AG04449 (cell line): ENCODE measurements at regions of chr20 and their contacts with region 1.

Region 1: DNA sequence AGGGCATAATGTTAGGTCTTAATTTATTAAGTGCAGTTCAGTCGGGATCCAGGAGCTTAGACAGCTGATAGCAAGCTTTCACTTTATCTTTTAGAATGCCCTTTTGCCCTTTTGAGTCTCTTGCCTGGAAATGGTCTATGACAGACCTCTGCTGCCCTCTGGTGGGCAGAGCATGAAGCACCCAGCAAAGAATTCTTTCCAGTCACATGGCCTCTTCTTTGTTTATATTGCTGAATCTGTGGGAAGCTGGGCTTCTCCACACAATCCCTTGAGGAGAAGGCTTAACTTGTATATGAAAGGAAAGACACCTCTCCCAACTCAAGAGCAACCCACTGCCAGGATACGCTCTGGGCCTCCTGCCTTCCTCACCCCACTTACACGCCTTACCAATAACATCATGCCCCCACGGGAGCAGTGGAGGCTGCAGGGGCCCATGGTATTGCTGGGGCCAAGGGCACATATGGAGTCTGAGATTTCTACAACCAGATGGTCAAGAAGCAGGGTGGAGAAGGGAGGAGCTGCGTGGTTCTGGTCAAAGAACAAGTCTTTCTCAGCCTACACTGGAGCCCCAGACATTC is 20.4 kb downstream of the WFDC3 start:
- DNase-seq: peak; percentile 26
- H3K4me3 ChIP-seq: no peak overlapping the region; the same call in 1 of the 2 replicates
- CTCF ChIP-seq: peak; percentile 79

Region 2: GRCh38 chr20:45322952-45323383 is 448.3 kb before region 1 on chr20:
- CTCF ChIA-PET with region 1: interaction called, 77 read pairs
- POLR2A ChIA-PET with region 1: no interaction called
- DNase-seq: no peak
- H3K4me3 ChIP-seq: no peak overlapping the region
- CTCF ChIP-seq: no peak

Region 3: GRCh38 chr20:45395114-45395415 is 376.2 kb before region 1 on chr20:
- CTCF ChIA-PET with region 1: no interaction called
- POLR2A ChIA-PET with region 1: no interaction called
- DNase-seq: no peak
- H3K4me3 ChIP-seq: no peak overlapping the region
- CTCF ChIP-seq: no peak

Region 4: GRCh38 chr20:45436732-45437391 is 334.4 kb before region 1 on chr20:
- CTCF ChIA-PET with region 1: interaction called, 24 read pairs
- POLR2A ChIA-PET with region 1: no interaction called
- DNase-seq: no peak
- H3K4me3 ChIP-seq: peak overlapping the region; percentile 60
- CTCF ChIP-seq: peak; percentile 95

Region 5: DNA sequence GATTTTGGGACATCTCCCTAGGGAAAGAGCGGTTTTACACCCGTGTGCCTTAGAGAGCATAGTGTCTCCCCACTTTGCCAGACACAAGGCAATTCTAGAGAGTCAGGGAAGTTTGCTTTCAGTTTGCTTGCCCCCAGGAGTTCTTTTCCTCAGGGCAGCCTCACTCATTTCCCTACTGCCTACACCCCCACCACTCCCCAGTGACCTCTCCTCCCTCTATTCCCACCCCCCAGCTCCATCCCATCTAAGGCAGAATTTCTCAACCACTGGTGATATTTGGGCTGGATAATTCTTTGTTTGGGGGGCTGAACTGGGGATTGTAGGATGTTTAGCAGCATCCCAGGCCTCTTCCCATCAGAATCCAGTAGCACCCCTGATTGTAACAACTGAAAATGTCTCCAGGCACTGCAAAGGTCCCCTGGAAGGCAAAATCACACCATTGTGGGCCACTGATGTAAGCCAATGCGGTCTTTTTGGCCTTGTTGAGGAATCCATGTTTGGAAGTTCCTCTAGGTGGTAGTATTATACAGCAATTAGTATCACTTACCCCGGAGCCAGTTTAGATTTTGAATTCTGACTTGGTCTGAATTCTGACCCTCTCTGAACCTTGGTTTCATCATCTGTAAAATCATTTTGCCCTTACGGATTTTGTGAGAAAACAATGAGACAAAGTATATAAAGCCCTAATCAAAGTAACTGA is 225.4 kb before region 1 on chr20:
- CTCF ChIA-PET with region 1: interaction called, 43 read pairs
- POLR2A ChIA-PET with region 1: no interaction called
- DNase-seq: no peak
- H3K4me3 ChIP-seq: no peak overlapping the region
- CTCF ChIP-seq: no peak

Region 6: DNA sequence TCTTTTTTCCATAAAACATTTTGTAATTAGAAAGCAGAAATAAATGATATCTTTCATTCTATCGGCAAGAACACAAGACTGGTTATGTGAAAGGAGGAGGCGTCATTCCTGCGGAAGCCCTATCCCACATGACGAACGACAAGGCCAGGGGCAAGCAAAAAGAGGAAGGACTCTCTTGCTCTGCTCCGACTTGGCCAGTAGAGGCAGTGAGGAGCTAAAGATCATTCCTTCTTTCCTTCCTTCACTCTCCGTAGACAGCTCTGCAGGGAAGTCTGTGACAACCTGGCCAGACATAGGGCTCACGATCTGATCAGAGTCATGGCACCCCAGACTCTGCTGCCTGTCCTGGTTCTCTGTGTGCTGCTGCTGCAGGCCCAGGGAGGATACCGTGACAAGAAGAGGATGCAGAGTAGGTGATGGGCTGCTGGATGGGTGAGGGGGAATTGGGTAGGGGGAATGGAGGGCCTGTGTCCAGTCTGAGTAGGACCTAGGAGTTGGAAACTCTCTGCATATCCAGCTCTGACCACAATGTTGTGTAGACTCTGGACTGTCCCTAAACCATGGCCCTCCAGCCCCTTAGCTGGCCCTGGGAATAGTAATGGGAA is 141.7 kb before region 1 on chr20 and contains the start of gene WFDC10A:
- CTCF ChIA-PET with region 1: interaction called, 14 read pairs
- POLR2A ChIA-PET with region 1: no interaction called
- DNase-seq: no peak
- H3K4me3 ChIP-seq: no peak within 1 kb of the TSS
- CTCF ChIP-seq: peak; percentile 81

Region 7: GRCh38 chr20:45695496-45695895 is 75.8 kb before region 1 on chr20:
- CTCF ChIA-PET with region 1: no interaction called
- POLR2A ChIA-PET with region 1: no interaction called
- DNase-seq: no peak
- H3K4me3 ChIP-seq: no peak overlapping the region
- CTCF ChIP-seq: no peak

Region 8: DNA sequence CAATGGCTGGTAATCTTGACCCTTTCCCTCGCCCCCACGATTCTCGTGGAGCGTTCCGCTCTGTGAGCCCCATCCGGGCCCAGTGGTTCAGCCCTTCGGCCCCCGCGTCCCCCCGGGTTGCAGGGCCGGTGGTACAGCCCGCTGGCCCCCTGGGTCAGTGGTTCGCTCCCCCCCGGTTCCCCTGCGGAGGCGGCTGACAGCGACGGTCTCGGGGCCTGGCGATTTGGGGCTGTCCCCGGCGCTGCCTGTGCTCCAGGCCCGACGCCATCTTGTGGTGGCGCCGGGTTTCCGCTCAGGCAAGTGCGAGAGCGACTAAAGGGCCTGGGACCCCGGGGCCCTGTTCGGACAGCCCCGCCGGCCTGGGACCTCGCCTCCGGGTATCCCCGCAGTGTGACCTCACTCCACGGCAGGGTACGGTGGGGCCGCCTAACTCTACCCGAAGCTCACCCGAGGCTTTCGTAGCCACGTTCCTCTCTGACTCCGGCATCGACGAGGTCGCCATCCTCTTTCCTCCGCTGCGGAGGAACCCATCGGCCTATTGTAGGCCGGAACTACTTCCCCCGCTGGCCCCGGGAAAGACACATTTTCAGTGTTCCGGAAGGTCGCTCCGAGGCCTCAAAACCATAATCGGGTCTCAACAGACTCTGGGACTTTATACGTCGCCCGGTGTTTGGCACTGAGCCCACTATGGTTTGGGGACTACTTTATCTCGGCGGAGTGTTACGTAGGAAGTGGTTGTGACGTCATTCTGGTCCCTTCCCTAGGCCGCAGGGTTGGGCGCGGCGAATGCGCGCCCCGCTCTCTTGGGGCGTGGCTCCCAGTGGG is 200.6 kb after region 1 on chr20 and contains the start of gene ZNF335:
- CTCF ChIA-PET with region 1: interaction called, 11 read pairs
- POLR2A ChIA-PET with region 1: no interaction called
- DNase-seq: peak; percentile 82
- H3K4me3 ChIP-seq: peak within 1 kb of the TSS; percentile 97
- CTCF ChIP-seq: peak; percentile 38